ENCODE measurements at regions of chr16 and their contacts with region 1.

Region 1: DNA sequence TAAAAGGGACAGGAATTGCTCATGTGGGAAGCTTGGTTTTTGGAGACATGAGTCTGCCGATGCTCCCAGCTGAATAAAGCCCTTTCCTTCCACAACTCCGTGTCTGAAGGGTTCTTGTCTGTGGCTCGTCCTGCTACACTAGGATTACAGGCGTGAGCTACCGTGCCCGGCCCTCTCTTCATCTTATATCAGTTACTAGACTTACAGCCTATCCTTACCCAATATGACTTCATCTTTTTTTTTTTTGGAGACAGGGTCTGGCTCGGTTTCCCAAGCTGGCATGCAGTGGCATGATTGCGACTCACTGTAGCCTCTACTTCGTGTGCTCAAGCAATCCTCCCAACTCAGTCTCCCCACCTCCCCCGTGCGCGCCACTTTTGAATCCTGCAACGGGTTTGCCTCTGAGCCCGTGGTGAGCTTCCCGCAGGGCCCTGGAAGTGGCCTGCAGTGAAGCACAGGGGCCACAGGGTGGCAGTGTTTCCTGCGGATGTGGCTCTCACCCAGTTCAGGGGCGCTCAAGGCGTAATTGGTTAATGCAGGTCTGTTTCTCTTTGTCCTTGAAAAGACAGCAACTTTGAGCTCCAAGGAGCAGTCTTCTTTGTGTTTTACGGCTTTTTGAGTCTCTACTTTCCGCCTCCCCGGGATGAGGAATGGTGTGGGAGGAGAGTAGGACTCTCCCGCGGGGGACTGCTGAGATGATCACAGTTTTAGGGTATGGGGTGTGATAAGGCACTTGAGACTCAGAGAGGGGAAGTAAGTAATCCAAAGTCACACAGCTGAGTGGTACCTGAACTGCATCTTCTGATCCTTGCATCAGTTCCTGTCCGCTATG is 22.7 kb upstream of the GPRC5B start:
- DNase-seq: peak; percentile 92
- H3K4me3 Mint-ChIP-seq: peak overlapping the region; percentile 24
- H3K27ac Mint-ChIP-seq: no peak overlapping the region
- H3K4me1 Mint-ChIP-seq: peaks cover 8% of the 10 kb centered on the region
- H3K27me3 Mint-ChIP-seq: peaks cover 8% of the 10 kb centered on the region

Region 2: GRCh38 chr16:19645557-19645981 is 261.8 kb before region 1 on chr16:
- intact Hi-C with region 1: no loop called
- DNase-seq: no peak
- H3K4me3 Mint-ChIP-seq: no peak overlapping the region
- H3K27ac Mint-ChIP-seq: no peak overlapping the region
- H3K4me1 Mint-ChIP-seq: peaks cover 2% of the 10 kb centered on the region
- H3K27me3 Mint-ChIP-seq: no peaks in the 10 kb centered on the region

Region 3: GRCh38 chr16:19948186-19949104 is 41.1 kb after region 1 on chr16:
- intact Hi-C with region 1: no loop called
- DNase-seq: no peak
- H3K4me3 Mint-ChIP-seq: no peak overlapping the region
- H3K27ac Mint-ChIP-seq: no peak overlapping the region
- H3K4me1 Mint-ChIP-seq: no peaks in the 10 kb centered on the region
- H3K27me3 Mint-ChIP-seq: peaks cover 3% of the 10 kb centered on the region

Region 4: GRCh38 chr16:20166531-20167235 is 259.3 kb after region 1 on chr16:
- intact Hi-C with region 1: no loop called
- DNase-seq: no peak
- H3K4me3 Mint-ChIP-seq: no peak overlapping the region
- H3K27ac Mint-ChIP-seq: no peak overlapping the region
- H3K4me1 Mint-ChIP-seq: no peaks in the 10 kb centered on the region
- H3K27me3 Mint-ChIP-seq: no peaks in the 10 kb centered on the region

Region 5: DNA sequence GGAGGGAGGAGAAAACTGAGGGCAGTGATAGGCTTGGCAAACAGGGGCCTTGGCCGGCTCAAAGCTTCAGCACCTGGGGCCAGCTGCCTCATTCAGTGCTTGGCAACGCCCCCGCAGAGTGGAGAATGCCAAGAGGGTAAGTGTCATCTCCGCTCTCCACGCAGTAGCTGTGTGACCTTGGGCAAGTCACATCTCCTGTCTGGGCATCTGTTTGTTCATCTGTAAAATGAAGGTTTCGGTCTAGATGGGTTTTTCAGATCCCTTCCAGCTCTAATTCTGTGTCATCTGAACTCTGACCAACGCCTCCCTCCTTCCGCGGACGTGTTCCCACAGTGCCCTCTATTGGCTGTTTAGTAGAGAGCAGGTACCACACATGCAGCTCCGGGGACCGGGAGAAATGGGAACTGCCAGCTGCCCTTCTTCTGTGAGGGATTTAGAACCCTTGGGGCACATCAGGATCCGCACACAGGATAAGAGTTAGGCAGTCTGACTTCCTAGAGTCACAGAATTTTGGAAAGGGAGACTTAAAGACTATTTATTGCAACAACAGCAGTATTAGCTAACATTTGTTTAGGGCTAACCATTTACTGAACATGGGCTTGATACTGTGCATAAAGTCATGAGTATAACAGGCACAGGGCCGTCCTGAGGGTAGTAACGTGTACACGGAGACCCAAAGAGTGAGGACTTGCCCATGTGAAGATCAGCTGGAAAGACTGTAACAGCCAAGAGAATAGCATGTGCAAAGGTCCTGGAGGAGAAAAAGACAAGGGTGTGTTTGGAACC is 393.1 kb after region 1 on chr16:
- intact Hi-C with region 1: loop called (anchors 1 kb)
- DNase-seq: peak; percentile 78
- H3K4me3 Mint-ChIP-seq: no peak overlapping the region
- H3K27ac Mint-ChIP-seq: no peak overlapping the region
- H3K4me1 Mint-ChIP-seq: no peaks in the 10 kb centered on the region
- H3K27me3 Mint-ChIP-seq: no peaks in the 10 kb centered on the region

Region 6: GRCh38 chr16:20383106-20384029 is 476.0 kb after region 1 on chr16:
- intact Hi-C with region 1: loop called (anchors 1 kb)
- DNase-seq: peak; percentile 85
- H3K4me3 Mint-ChIP-seq: no peak overlapping the region
- H3K27ac Mint-ChIP-seq: no peak overlapping the region
- H3K4me1 Mint-ChIP-seq: no peaks in the 10 kb centered on the region
- H3K27me3 Mint-ChIP-seq: no peaks in the 10 kb centered on the region

Region 7: GRCh38 chr16:20707461-20707860 is 800.1 kb after region 1 on chr16:
- intact Hi-C with region 1: loop called (anchors 5 kb)
- DNase-seq: no peak
- H3K4me3 Mint-ChIP-seq: no peak overlapping the region
- H3K27ac Mint-ChIP-seq: no peak overlapping the region
- H3K4me1 Mint-ChIP-seq: no peaks in the 10 kb centered on the region
- H3K27me3 Mint-ChIP-seq: no peaks in the 10 kb centered on the region